Left ventricle myocardium superior (tissue), 1 donor: ENCODE measurements at regions of chr3 and their contacts with region 1.

Region 1: GRCh38 chr3:141105828-141106628 is 54.9 kb downstream of the SPSB4 start:
- DNase-seq: no peak
- ATAC-seq: peak; percentile 8

Region 2: DNA sequence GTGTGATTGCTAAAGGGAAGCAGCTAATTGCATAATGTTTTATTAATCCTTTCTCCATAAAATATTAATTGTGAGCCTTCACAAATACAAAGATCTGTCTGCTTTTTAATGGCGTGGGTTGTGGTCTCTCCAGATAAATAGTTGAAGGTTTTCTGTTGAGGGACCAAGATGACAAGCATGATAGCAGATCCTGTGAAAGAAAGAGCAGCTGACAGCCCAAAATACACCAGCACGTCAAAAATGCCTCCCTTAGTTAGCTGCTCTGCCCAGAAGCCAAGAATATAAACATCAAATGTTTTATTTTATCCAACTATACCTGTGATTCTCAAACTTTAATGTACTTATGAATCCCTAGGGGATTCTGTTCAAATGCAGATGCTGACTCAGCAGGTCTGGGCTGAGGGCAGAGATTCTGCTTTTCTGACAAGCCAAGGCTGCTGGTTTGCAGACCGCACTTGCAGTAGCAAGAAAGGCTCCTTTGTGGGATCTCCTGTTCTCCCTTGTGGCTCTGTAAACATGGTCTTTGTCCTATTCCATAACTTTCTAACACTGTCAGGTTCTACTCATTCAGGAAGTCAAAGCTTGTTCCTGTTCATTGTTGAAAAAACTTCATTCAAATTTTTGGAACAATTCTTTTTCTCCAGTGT is 283.5 kb before region 1 on chr3:
- intact Hi-C with region 1: no loop called
- DNase-seq: no peak
- ATAC-seq: no peak

Region 3: GRCh38 chr3:141011232-141011996 is 94.6 kb before region 1 on chr3:
- intact Hi-C with region 1: loop called (anchors 10 kb)
- DNase-seq: peak; percentile 90
- ATAC-seq: peak; percentile 77

Region 4: GRCh38 chr3:141050576-141051442 is 55.2 kb before region 1 on chr3 and contains the start of gene SPSB4:
- intact Hi-C with region 1: loop called (anchors 10 kb)
- DNase-seq: peak; percentile 89
- ATAC-seq: peak; percentile 91
- total RNA-seq, gene SPSB4: 5.3 TPM

Region 5: DNA sequence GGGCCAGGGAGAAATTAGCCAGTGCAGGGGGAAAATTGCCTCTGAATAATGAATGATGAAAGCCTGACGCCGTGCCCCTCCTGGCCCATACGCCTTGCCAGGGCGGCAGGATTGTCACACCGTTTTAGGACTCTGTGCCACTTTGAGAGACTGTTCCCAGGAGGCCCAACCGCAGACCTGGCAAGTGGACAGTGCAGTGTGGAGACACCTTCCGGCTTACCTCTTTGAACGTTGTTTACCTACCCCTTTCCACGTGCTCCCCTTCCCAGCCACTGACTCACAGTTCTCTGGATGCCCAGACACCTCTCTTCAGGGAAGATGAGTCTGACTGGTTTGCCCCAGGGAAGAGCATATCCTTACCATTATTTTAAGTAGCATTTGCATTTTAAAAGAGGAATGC is 41.6 kb after region 1 on chr3:
- intact Hi-C with region 1: no loop called
- DNase-seq: no peak
- ATAC-seq: no peak